OCI-LY7 (cell line): ENCODE measurements at regions of chr2 and their contacts with region 1.

Region 1: GRCh38 chr2:233380132-233380895 is 26.0 kb downstream of the DGKD start:
- DNase-seq: peak; percentile 62
- H3K4me3 ChIP-seq: peak overlapping the region; percentile 21
- H3K27ac ChIP-seq: peak overlapping the region; percentile 52
- H3K4me1 ChIP-seq: peaks cover 86% of the 10 kb centered on the region
- CTCF ChIP-seq: no peak

Region 2: DNA sequence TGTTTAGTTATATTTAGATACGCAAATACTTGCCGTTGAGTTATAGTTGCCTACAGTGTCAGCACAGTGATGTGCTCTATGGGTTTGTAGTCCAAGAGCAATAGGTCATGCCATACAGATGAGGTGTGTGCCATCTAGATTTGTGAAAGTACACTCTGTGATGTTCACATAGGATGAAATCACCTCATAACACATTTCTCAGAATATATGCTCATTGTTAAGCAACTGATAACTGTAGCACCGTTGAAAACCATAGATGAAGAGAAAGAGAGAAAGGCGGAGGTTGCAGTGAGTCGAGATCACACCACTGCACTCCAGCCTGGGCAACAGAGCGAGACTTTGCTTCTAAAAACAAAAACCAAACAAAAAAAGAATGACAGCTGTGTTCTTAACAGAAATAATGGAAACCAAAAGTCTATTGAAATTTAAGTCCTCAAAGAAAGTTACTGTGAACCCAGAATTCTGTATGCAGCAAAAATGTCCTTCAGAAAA is 16.5 kb before region 1 on chr2:
- CTCF ChIA-PET with region 1: no interaction called
- POLR2A ChIA-PET with region 1: interaction called, 38 read pairs
- intact Hi-C with region 1: no loop called
- DNase-seq: peak; percentile 54
- H3K4me3 ChIP-seq: peak overlapping the region; percentile 36
- H3K27ac ChIP-seq: peak overlapping the region; percentile 90
- H3K4me1 ChIP-seq: peaks cover 89% of the 10 kb centered on the region
- CTCF ChIP-seq: no peak